ENCODE measurements at regions of chr6 and their contacts with region 1.

Region 1: DNA sequence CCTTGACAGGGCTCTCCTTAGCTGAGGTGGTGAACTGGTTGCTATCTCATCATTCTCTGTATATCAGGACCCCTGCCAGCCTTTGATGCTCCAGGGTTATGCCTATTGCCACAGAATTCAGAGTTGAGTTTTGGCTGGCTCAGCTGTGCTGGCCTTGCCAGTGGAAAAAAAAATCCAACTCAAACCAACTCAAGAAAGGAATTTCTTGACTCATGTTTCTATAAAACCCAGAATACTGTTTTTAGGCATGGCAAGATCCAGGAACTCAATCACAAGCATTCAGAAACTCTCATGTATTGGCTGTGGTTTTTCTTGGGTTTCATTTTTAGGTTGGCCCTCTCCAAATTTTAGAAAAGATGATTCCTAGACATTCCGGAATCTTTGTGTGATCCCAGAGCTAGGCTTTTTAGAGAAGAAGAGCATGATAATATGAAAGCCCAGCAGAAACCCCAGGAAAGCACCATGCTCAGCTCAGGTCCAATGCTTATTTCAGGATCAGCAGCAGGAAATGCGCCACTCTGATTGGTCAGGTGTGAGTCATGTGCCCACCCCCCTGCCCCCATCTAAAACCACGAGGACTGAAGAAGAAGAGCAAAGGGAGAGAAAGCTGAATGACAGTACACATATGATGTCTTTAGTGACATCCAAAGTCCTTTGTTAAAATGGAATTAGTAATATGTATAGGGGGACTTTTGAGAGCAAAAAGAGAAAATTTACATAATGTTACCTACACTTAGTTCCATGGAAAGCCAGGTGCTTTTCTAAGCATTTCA is 122.9 kb downstream of the RNF144B start:
- DNase-seq: no peak
- H3K4me3 Mint-ChIP-seq: no peak overlapping the region
- H3K27ac Mint-ChIP-seq: peak overlapping the region; percentile 38
- H3K4me1 Mint-ChIP-seq: peaks cover 31% of the 10 kb centered on the region
- H3K27me3 Mint-ChIP-seq: peaks cover 23% of the 10 kb centered on the region

Region 2: GRCh38 chr6:18264219-18264922 is 245.7 kb before region 1 on chr6 and contains the start of gene DEK:
- intact Hi-C with region 1: loop called (anchors 1 kb)
- DNase-seq: peak; percentile 82
- H3K4me3 Mint-ChIP-seq: peak within 1 kb of the TSS; percentile 98
- H3K27ac Mint-ChIP-seq: peak within 1 kb of the TSS; percentile 97
- H3K4me1 Mint-ChIP-seq: peaks cover 40% of the 10 kb centered on the region
- H3K27me3 Mint-ChIP-seq: no peaks in the 10 kb centered on the region
- total RNA-seq, gene DEK: 182 and 198 TPM in 2 replicates

Region 3: GRCh38 chr6:18392346-18392884 is 117.6 kb before region 1 on chr6:
- intact Hi-C with region 1: loop called (anchors 5 kb)
- DNase-seq: no peak
- H3K4me3 Mint-ChIP-seq: no peak overlapping the region
- H3K27ac Mint-ChIP-seq: no peak overlapping the region
- H3K4me1 Mint-ChIP-seq: peaks cover 21% of the 10 kb centered on the region
- H3K27me3 Mint-ChIP-seq: peaks cover 11% of the 10 kb centered on the region

Measured in activated T-helper 2 cell treated with anti-CD3 and anti-CD28 coated beads, Interferon-gamma antibody, Interleukin-2, Interleukin-4, amounts not matched to agents 10 μg/mL and 5 μg/mL and 100 μg/mL, durations not matched to agents 14 hours and 24 hours and 36 hours (primary cell).